ENCODE measurements at regions of chr1 and their contacts with region 1.

Region 1: GRCh38 chr1:29341936-29342335 is 105.6 kb downstream of the PTPRU start:
- DNase-seq: no peak
- CTCF ChIP-seq: no peak

Region 2: DNA sequence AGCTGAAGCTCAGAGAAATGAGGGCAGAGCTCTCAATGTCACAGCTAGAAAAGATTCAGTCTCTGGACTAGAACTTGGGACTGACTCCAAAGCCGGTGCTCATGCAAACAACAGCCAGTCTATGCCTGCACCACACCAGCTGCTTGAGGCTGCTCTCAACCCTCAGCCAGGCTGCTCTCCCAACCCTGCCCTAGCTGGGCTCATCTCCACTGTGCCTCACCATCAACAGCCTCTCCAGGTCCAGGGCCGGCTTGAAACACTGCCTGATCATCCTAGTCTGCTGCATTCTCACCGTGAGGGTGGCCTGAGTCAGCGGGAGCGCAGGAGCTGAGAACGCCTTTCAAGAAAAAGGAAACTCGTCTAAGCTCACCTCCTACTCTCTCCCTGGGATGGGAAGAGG is 11.1 kb before region 1 on chr1:
- CTCF ChIA-PET with region 1: interaction called, 13 read pairs
- POLR2A ChIA-PET with region 1: no interaction called
- DNase-seq: no peak
- CTCF ChIP-seq: no peak